OCI-LY7 (cell line): ENCODE measurements at regions of chr18 and their contacts with region 1.

Region 1: GRCh38 chr18:21955757-21956652 is 213.4 kb upstream of the GATA6 start:
- DNase-seq: peak; percentile 77
- H3K4me3 ChIP-seq: no peak overlapping the region
- H3K27ac ChIP-seq: no peak overlapping the region
- H3K4me1 ChIP-seq: no peaks in the 10 kb centered on the region
- CTCF ChIP-seq: peak; percentile 99

Region 2: DNA sequence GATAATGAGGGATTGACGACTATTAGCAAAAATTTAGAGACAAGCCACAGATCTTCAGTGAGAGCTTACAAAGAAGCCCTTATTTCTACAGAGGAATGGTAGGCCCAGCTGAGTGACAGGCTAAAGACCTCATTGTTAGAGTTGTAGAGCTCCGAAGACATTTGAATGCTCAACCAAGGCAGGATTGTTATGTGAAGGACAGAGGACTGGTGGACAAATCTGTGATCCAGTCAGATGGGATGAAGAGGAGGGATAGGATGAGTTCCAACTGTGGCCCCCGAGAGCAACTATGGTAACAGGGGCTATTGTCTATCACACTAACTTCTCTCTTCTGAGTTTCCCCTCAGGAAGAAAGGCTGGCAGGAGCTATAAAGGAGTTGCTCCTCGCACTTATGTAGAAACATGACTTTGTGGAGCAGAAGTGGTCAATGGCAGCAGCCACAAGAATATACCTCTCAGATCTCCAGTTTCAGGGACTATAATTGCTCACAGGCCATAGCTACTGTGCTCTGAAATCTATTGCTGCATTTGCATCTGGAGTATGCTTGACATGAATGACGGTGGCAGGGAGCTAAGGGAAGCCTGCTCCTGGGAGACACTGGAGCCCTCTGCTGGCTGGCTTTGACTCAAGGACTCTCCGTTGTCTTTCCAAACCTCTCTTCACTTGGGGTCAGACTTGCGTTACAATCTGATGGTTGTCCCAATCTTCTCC is 764.3 kb before region 1 on chr18:
- CTCF ChIA-PET with region 1: no interaction called
- POLR2A ChIA-PET with region 1: no interaction called
- intact Hi-C with region 1: loop called (anchors 2 kb)
- DNase-seq: peak; percentile 30
- H3K4me3 ChIP-seq: no peak overlapping the region
- H3K27ac ChIP-seq: no peak overlapping the region
- H3K4me1 ChIP-seq: no peaks in the 10 kb centered on the region
- CTCF ChIP-seq: peak; percentile 77

Region 3: DNA sequence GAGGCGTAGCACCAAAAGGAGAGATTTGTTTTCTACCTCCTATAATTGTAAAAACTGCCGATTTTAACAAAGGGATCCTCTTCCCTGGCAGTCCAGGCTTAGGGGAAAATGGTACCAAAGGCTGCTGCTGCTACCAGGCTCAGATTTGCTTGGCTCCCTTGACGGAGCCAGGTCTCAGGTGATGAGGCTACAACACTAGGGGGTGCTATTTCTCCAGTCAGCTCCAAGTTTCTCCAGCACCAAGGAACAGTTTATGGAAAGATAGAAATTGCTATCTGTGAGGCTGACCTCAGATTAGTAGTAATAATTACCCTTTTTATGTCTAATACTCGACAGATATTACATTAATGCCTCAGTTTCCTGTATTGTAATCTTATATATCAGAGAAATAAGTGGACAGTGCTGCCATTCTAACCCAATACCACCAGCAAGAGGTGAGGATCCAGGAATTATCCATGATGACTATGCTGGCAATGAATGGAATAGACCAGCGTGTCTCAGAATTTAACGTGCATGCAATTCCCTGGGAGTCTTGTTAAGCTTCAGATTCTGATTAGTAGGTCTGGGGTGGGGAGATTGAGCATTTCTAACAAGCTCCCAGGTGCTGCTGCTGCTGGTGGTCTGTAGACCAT is 466.8 kb before region 1 on chr18:
- CTCF ChIA-PET with region 1: no interaction called
- POLR2A ChIA-PET with region 1: no interaction called
- intact Hi-C with region 1: loop called (anchors 1 kb)
- DNase-seq: peak; percentile 67
- H3K4me3 ChIP-seq: no peak overlapping the region
- H3K27ac ChIP-seq: no peak overlapping the region
- H3K4me1 ChIP-seq: peaks cover 5% of the 10 kb centered on the region
- CTCF ChIP-seq: peak; percentile 93

Region 4: GRCh38 chr18:21805771-21806366 is 150.1 kb before region 1 on chr18:
- CTCF ChIA-PET with region 1: no interaction called
- POLR2A ChIA-PET with region 1: no interaction called
- intact Hi-C with region 1: no loop called
- DNase-seq: no peak
- H3K4me3 ChIP-seq: no peak overlapping the region
- H3K27ac ChIP-seq: no peak overlapping the region
- H3K4me1 ChIP-seq: no peaks in the 10 kb centered on the region
- CTCF ChIP-seq: no peak

Region 5: GRCh38 chr18:21820035-21820810 is 135.8 kb before region 1 on chr18:
- CTCF ChIA-PET with region 1: no interaction called
- POLR2A ChIA-PET with region 1: no interaction called
- intact Hi-C with region 1: loop called (anchors 5 kb)
- DNase-seq: peak; percentile 19
- H3K4me3 ChIP-seq: no peak overlapping the region
- H3K27ac ChIP-seq: no peak overlapping the region
- H3K4me1 ChIP-seq: no peaks in the 10 kb centered on the region
- CTCF ChIP-seq: peak; percentile 86

Region 6: DNA sequence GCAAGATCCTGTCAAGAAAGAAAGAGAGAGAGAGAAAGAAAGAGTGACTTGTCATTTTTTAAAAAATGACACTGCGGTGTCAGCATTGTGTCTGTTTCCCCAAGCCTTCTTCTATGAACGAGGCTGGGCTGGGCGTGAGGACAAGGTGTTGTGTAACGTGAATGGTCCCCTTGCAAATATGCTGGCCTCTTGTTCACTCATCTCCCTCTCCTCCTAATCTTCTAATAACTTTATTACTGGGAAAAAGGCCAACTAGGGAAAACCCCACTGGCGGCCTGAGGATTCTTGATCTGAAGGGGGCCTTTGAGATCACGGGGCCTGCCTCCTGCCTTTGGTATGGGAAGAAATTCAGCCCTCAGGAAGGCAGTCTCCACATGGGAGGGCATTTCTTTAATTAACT is 52.3 kb before region 1 on chr18:
- CTCF ChIA-PET with region 1: no interaction called
- POLR2A ChIA-PET with region 1: no interaction called
- intact Hi-C with region 1: no loop called
- DNase-seq: no peak
- H3K4me3 ChIP-seq: no peak overlapping the region
- H3K27ac ChIP-seq: no peak overlapping the region
- H3K4me1 ChIP-seq: no peaks in the 10 kb centered on the region
- CTCF ChIP-seq: no peak

Region 7: GRCh38 chr18:21914739-21915319 is 41.2 kb before region 1 on chr18:
- CTCF ChIA-PET with region 1: no interaction called
- POLR2A ChIA-PET with region 1: interaction called, 4 read pairs
- intact Hi-C with region 1: loop called (anchors 5 kb)
- DNase-seq: peak; percentile 15
- H3K4me3 ChIP-seq: no peak overlapping the region
- H3K27ac ChIP-seq: no peak overlapping the region
- H3K4me1 ChIP-seq: no peaks in the 10 kb centered on the region
- CTCF ChIP-seq: peak; percentile 75